PC-3 (cell line): ENCODE measurements at regions of chr1 and their contacts with region 1.

Region 1: DNA sequence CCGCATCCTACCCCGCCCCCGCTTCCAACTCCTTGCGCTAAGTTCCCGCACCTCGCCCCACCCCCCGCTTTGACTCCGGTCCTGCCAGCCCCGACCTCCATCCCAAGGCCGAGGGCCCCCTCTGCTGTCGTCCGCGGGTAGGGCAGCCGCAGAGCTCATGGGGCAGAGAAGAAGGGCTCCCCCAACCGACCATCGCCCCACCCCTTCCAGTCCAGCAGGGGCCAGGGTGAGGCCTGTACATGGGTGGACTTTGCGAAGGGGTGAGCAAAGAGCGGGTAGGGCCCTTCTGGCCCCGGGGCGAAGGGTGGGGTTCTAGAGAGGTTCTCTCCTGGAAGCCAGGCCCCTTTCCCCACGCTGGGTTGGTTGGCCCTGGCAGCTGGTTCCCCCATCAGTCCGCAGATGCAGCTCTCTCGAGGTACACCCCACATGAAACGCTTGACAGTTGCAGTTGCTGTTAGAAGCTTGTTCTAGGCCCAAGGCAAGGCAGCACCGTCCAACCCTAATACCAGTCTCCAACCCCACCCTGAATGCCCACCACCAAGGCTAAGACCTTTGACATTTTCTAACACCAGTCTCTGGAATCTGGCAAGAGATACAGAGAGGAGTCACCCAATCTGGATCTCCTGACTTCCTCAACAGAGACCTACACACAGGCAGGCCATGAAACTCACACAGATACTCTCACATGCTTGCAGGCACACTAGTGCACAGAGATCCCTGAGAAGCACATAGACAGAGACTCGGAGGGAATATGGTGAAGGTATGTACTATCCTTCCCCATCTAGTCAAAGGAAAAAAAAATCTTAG is 25.3 kb upstream of the ADGRB2 start:
- DNase-seq: peak; percentile 91
- ATAC-seq: peak; percentile 81
- H3K4me3 ChIP-seq: peak overlapping the region; percentile 76
- H3K27ac ChIP-seq: no peak overlapping the region
- H3K4me1 ChIP-seq: no peaks in the 10 kb centered on the region
- H3K27me3 ChIP-seq: no peaks in the 10 kb centered on the region
- CTCF ChIP-seq: peak; percentile 89

Region 2: GRCh38 chr1:30302858-30303786 is 1486.3 kb before region 1 on chr1:
- CTCF ChIA-PET with region 1: no interaction called
- POLR2A ChIA-PET with region 1: no interaction called
- intact Hi-C with region 1: no loop called
- DNase-seq: no peak
- ATAC-seq: no peak
- H3K4me3 ChIP-seq: no peak overlapping the region
- H3K27ac ChIP-seq: no peak overlapping the region
- H3K4me1 ChIP-seq: no peaks in the 10 kb centered on the region
- H3K27me3 ChIP-seq: peaks cover 10% of the 10 kb centered on the region
- CTCF ChIP-seq: no peak

Region 3: GRCh38 chr1:31564134-31564989 is 225.1 kb before region 1 on chr1:
- CTCF ChIA-PET with region 1: no interaction called
- POLR2A ChIA-PET with region 1: no interaction called
- intact Hi-C with region 1: loop called (anchors 2 kb)
- DNase-seq: peak; percentile 88
- ATAC-seq: peak; percentile 60
- H3K4me3 ChIP-seq: no peak overlapping the region
- H3K27ac ChIP-seq: peak overlapping the region; percentile 79
- H3K4me1 ChIP-seq: peaks cover 33% of the 10 kb centered on the region
- H3K27me3 ChIP-seq: no peaks in the 10 kb centered on the region
- CTCF ChIP-seq: peak; percentile 93

Region 4: DNA sequence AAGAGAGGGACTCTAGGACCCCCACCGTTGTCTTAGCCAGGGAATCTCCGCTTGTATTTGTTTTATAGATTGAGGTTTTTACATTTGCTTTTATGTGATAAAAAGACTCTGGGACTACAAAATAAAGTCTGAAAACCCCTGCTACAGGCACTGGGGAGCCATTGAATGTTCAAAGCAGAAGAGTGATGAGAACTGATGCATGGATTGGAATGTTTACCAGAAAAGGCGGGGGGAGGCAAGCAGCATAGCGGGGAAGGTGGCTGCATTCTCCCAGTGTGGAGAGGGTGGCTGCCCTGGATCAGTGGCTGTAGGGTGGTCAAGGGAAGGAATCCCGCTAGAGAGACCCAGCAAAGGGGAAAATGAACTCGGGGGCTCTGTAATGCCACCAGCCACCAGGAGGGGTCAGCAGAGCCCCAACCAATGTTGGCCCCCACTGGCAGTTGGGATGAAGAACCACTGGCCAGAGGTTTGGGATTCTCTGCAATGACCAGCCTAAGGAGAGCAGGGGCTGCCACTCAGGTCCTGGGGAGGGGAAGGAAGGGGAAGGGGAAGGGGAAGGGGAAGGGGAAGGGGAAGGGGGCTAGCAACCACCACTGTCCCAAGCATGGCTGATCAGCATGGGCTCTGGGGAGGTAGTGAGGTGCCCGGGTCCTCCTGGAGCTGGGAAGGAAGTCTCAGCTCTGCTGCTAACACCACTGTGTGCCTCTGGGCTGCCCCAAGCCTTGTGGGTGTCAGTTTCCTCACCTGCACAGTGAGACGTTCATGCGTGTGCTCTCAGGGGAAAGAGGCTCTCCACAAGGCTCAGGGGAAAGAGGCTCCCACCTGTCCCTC is 125.6 kb before region 1 on chr1:
- CTCF ChIA-PET with region 1: interaction called, 8 read pairs
- POLR2A ChIA-PET with region 1: no interaction called
- intact Hi-C with region 1: loop called (anchors 1 kb)
- DNase-seq: peak; percentile 72
- ATAC-seq: peak; percentile 50
- H3K4me3 ChIP-seq: no peak overlapping the region
- H3K27ac ChIP-seq: no peak overlapping the region
- H3K4me1 ChIP-seq: peaks cover 14% of the 10 kb centered on the region
- H3K27me3 ChIP-seq: no peaks in the 10 kb centered on the region
- CTCF ChIP-seq: peak; percentile 93

Region 5: DNA sequence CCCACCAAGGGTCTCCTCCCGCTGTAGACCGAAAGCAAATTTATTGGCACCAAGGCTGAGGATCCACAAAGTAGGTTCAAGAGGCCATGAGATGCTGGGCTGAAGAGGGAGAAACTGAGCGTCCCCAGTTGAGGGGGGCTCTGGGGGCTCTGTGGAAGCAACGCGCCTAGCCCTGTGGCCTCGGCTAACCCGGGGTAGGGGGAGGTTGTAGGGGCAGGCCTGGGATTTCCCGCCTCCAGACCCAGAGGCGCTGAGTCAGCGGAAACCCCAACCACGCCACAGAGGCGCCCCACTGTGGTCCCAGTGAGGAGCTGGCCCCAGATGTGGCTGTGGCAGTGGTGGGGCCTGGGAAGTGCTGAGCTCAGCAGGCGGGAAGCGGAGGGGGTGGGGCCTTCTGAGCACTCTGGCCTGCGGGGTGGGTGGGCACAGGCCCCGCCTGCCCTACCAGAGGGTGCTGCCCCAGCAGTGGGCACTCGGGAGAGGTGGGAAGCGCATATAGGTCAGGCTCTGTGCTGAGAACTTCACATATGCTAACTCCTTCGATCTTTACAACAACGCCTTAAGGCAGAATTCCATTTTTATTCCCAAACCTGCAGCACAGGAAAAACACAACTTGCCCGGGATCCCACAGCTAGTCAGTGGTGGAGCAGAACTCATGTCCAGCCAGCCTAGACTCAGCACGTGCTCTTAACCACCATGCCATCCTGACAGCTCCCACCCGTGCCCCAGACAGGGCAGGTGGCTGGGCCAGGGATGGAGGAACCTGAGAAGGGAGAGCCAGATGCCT is 84.2 kb before region 1 on chr1:
- CTCF ChIA-PET with region 1: interaction called, 12 read pairs
- POLR2A ChIA-PET with region 1: no interaction called
- intact Hi-C with region 1: no loop called
- DNase-seq: peak; percentile 49
- ATAC-seq: peak; percentile 10; the same call in 1 of the 2 replicates
- H3K4me3 ChIP-seq: no peak overlapping the region
- H3K27ac ChIP-seq: no peak overlapping the region
- H3K4me1 ChIP-seq: peaks cover 40% of the 10 kb centered on the region
- H3K27me3 ChIP-seq: no peaks in the 10 kb centered on the region
- CTCF ChIP-seq: peak; percentile 40; the same call in 1 of the 2 replicates

Region 6: DNA sequence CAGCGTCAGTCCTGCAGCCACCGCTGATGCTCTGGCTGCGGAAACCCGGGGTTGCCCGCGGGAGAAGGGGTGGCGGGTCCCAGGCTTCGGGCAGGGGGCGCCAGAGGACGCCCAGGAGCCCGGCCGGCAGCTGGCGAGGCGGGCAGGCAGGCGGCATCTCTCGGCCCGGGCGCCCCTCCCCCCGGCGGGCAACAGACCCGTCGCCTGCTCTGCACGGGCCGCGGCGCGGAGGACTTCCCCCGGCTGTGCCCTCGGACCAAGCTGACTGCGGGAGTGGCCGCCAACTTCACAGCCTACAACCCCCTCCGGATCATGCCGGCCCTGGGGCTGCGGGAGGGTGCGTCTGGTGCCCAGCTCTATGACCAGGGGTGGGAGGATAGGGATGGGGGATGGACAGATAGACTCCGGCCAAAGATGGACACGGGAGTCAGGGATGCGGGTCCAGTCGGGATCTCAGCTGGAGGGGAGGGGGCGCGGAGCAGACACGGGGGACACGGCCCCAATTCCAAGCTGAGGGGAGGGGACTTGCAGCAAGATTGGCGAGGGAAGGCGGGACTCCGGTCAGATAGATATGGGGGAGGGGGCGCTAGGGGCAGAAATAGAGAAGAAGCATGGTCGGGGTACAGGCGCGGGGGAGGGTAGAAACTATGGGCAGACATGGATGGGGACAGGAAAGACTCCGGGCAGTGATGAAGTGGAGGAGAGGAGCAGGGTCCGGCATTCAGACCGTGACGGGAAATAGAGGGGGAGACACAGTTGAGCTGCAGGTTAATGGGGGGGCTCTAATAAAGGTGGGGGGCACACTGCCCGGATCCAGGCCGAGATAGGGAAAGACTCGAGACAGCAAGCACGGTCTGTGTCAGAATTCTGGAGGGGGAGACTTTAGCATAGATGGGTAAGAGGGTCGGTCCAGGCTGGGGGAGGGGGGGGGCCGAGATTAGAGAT is 26.5 kb before region 1 on chr1:
- CTCF ChIA-PET with region 1: interaction called, 23 read pairs
- POLR2A ChIA-PET with region 1: no interaction called
- intact Hi-C with region 1: loop called (anchors 1 kb)
- DNase-seq: peak; percentile 76
- ATAC-seq: peak; percentile 56
- H3K4me3 ChIP-seq: peak overlapping the region; percentile 78
- H3K27ac ChIP-seq: no peak overlapping the region
- H3K4me1 ChIP-seq: peaks cover 24% of the 10 kb centered on the region
- H3K27me3 ChIP-seq: no peaks in the 10 kb centered on the region
- CTCF ChIP-seq: peak; percentile 69

Region 7: GRCh38 chr1:31773861-31774260 is 15.6 kb before region 1 on chr1:
- CTCF ChIA-PET with region 1: no interaction called
- POLR2A ChIA-PET with region 1: no interaction called
- intact Hi-C with region 1: no loop called
- DNase-seq: no peak
- ATAC-seq: no peak
- H3K4me3 ChIP-seq: no peak overlapping the region
- H3K27ac ChIP-seq: no peak overlapping the region
- H3K4me1 ChIP-seq: no peaks in the 10 kb centered on the region
- H3K27me3 ChIP-seq: no peaks in the 10 kb centered on the region
- CTCF ChIP-seq: no peak